GM13976 (cell line): ENCODE measurements at regions of chr1 and their contacts with region 1.

Region 1: GRCh38 chr1:198638894-198639635 is at the start of gene PTPRC:
- DNase-seq: peak; percentile 18
- CTCF ChIP-seq: no peak

Region 2: GRCh38 chr1:198018529-198018928 is 620.5 kb before region 1 on chr1:
- in situ Hi-C with region 1: no loop called
- DNase-seq: no peak
- CTCF ChIP-seq: no peak

Region 3: GRCh38 chr1:198157241-198157846 is 481.7 kb before region 1 on chr1:
- in situ Hi-C with region 1: loop called (anchors 25 kb)
- DNase-seq: peak; percentile 83
- CTCF ChIP-seq: no peak

Region 4: DNA sequence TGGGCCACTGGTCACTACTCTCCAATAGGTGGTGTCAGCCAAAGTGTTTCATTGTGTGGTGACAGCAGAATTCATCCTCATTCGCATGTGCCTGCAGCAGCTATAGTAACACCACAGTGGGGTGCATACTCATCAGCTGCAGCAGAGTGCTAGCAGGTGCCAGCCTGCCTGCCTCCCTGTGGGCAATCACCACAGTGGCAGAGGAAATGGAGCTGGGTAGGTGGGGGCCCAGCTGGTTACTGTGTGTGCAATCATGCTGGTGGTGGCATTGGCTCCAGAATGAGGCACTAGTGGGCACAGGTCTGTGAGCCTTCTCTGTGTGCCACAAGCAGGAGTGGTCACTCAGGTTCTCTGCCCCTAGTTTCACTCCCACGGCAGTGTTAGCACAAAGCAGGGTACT is 579.0 kb after region 1 on chr1:
- in situ Hi-C with region 1: no loop called
- DNase-seq: no peak
- CTCF ChIP-seq: no peak